HCT116 (cell line): ENCODE measurements at regions of chr20 and their contacts with region 1.

Region 1: DNA sequence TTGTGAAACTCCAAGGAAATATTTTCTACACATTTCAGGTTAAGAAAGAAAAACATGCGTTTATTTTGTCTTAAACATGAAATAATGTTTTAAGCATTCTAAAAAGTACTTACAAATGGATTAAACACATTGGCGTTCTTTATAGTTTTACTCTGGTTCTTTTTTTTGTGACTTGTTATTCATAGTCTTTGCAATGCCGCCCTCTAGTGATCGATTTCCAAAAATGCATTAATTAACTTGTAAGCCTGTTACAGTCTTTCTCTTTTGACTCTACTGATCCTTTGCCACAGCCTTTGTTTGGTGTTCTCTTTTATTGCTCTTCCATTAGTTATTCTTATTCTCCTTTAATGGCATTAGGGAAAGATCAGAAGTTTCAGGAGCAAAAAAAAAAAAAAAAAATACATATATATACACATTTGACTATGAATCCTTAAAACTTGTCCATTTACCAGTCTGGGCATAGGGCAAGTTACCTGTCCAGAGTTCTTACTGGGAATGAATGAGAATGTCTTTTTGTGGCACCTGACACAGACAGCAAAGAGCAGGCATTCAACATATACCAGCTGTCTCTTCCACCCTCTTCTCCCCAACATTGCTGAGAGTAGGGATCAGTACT is 59.9 kb downstream of the MACROD2 start:
- DNase-seq: peak; percentile 48
- ATAC-seq: peak; percentile 60; the same call in 1 of the 2 replicates
- H3K4me3 ChIP-seq: no peak overlapping the region
- H3K27ac ChIP-seq: no peak overlapping the region
- H3K4me1 ChIP-seq: no peaks in the 10 kb centered on the region
- H3K27me3 ChIP-seq: no peaks in the 10 kb centered on the region
- CTCF ChIP-seq: peak; percentile 45 to 77 (median 62); a peak in 5 of 6 replicates
- POLR2A ChIP-seq: no peak
- RAD21 ChIP-seq: peak; percentile 68

Region 2: DNA sequence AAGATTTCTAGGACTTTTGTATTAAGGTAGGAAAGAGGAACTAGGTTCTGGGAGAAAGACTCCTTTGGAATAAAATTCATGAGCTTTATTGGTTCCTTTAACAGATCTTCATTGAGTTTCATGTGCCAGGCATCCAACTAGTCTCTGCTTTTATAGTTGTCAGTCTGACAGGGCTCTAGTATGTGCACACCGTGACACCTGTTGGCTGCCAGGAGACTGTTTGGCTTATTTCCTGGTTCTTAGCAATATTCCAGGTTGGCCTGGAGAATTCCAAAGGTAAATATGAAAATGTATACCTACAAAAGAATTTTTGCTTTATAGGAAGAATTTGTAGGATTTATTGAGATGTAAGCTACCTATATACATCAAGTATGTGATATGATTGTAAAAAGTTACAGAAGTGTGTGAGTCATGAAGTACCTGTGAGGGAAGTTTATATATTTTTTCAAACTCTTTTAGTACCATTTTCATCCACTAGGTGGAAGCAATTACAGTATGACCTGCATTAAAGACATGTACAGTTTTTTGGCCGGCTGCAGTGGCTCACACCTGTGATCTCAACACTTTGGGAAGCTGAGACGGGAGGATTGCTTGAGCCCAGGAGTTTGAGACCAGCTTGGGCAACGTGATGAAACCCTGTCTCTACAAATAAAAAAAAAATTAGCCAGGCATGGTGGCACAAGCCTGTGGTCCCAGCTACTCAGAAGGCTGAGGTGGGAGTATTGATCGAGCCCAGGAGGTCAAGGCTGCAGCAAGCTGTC is 235.2 kb before region 1 on chr20:
- CTCF ChIA-PET with region 1: interaction called, 10 read pairs
- POLR2A ChIA-PET with region 1: no interaction called
- RAD21 ChIA-PET with region 1: interaction called in 1 of 2 experiments, 4 read pairs
- intact Hi-C with region 1: loop called (anchors 1 kb)
- DNase-seq: peak; percentile 42
- ATAC-seq: peak; percentile 87
- H3K4me3 ChIP-seq: no peak overlapping the region
- H3K27ac ChIP-seq: no peak overlapping the region
- H3K4me1 ChIP-seq: no peaks in the 10 kb centered on the region
- H3K27me3 ChIP-seq: no peaks in the 10 kb centered on the region; the same call in 1 of the 2 replicates
- CTCF ChIP-seq: peak; percentile 47 to 61 (median 51); a peak in 4 of 6 replicates
- POLR2A ChIP-seq: no peak
- RAD21 ChIP-seq: peak; percentile 54

Region 3: DNA sequence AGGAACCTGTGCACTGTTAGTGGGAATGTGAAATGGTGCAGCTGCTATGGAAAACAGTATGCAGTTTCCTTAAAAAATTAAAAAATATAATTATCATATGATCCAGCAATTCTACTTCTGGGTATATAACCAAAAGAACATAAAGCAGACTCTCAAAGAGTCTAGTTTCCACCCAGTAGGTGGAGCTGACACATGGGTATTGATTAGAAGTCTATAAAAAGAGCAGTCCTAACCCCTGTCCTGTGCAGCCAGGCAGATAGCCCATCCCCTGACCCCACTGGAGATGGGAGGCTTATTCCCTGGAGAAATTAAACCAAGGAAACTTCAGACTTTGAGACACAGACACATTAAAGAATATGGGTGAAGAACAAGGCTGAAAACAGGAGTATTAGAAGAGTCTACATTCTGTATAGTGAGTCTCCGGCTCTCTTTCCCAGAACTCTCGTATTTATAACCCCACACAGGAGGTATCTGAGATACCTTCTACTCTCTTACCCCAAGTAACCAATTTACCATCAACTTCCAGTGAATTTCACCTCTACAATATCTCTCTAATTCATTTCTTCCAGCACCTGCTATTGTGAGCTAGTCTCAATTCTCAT is 157.1 kb before region 1 on chr20:
- CTCF ChIA-PET with region 1: no interaction called
- POLR2A ChIA-PET with region 1: no interaction called
- RAD21 ChIA-PET with region 1: no interaction called
- intact Hi-C with region 1: loop called (anchors 5 kb)
- DNase-seq: peak; percentile 2
- ATAC-seq: peak; percentile 87
- H3K4me3 ChIP-seq: no peak overlapping the region
- H3K27ac ChIP-seq: no peak overlapping the region
- H3K4me1 ChIP-seq: no peaks in the 10 kb centered on the region
- H3K27me3 ChIP-seq: no peaks in the 10 kb centered on the region
- CTCF ChIP-seq: peak; percentile 12 to 34 (median 27); a peak in 3 of 6 replicates
- POLR2A ChIP-seq: no peak
- RAD21 ChIP-seq: peak; percentile 48

Region 4: GRCh38 chr20:13930281-13930680 is 125.0 kb before region 1 on chr20:
- CTCF ChIA-PET with region 1: no interaction called
- POLR2A ChIA-PET with region 1: no interaction called
- RAD21 ChIA-PET with region 1: no interaction called
- intact Hi-C with region 1: no loop called
- DNase-seq: no peak
- ATAC-seq: no peak
- H3K4me3 ChIP-seq: no peak overlapping the region
- H3K27ac ChIP-seq: no peak overlapping the region
- H3K4me1 ChIP-seq: no peaks in the 10 kb centered on the region
- H3K27me3 ChIP-seq: no peaks in the 10 kb centered on the region
- CTCF ChIP-seq: no peak
- POLR2A ChIP-seq: no peak
- RAD21 ChIP-seq: no peak